GM10248 (cell line): ENCODE measurements at regions of chr11 and their contacts with region 1.

Region 1: GRCh38 chr11:126268708-126269579 is at the starts of genes FOXRED1 and SRPRA:
- DNase-seq: peak; percentile 100
- CTCF ChIP-seq: no peak

Region 2: GRCh38 chr11:125514336-125515101 is 754.4 kb before region 1 on chr11:
- CTCF ChIA-PET with region 1: no interaction called
- POLR2A ChIA-PET with region 1: interaction called, 11 read pairs
- DNase-seq: peak; percentile 35
- CTCF ChIP-seq: no peak

Region 3: GRCh38 chr11:126636911-126637794 is 368.2 kb after region 1 on chr11:
- CTCF ChIA-PET with region 1: no interaction called
- POLR2A ChIA-PET with region 1: no interaction called
- DNase-seq: no peak
- CTCF ChIP-seq: no peak